Adrenal gland (tissue), 19 donors: ENCODE measurements at regions of chr2 and their contacts with region 1.

Region 1: DNA sequence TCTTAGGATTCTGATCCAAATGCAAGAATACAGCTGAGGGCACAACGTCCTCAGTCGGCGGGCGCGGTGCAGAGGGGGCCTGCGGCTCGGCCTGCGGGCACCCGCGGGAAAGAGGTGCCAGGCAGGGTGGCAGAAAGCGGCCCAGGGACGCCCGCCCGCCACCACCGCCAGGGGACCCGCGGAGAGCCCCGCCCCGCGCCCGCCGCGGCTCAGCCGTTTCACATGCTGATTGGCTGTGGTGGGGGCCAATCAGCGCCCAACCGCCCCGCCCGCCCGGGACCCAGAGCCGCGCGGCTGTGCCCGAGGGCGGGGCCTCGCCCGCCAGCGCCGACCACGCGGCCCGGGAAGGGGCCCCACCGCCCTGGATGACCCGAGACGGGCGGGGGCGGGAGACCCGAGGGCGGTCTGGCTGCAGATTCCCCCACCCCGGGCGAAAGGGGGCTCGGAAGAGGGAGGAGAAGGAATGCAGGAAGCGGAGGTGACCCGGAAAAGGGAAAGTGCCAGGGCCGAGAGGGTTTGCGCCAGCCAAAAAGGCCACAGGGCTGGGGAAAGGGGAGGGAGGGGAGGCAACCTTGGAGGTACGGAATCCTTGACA is 8.0 kb downstream of the IRS1 start:
- DNase-seq: peak; percentile 93 to 95 (median 94)
- H3K4me3 ChIP-seq: peak overlapping the region; percentile 28 to 63 (median 32)
- H3K27ac ChIP-seq: peak overlapping the region; percentile 84 to 97 (median 91)
- H3K4me1 ChIP-seq: peaks cover 55 to 74% of the 10 kb centered on the region in 2 donors
- H3K27me3 ChIP-seq: no peaks in the 10 kb centered on the region
- CTCF ChIP-seq: peak; percentile 6 to 82 (median 61)
- POLR2A ChIP-seq: peak; percentile 54 to 80

Region 2: GRCh38 chr2:226124548-226125011 is 667.0 kb before region 1 on chr2:
- intact Hi-C with region 1: loop called in 1 of 2 experiments (anchors 10 kb)
- DNase-seq: no peak
- H3K4me3 ChIP-seq: no peak overlapping the region
- H3K27ac ChIP-seq: peak overlapping the region in 1 of 5 donors; percentile 31
- H3K4me1 ChIP-seq: peaks cover 0 to 4% of the 10 kb centered on the region in 2 donors
- H3K27me3 ChIP-seq: no peaks in the 10 kb centered on the region
- CTCF ChIP-seq: no peak
- POLR2A ChIP-seq: no peak

Region 3: GRCh38 chr2:226215902-226216503 is 575.6 kb before region 1 on chr2:
- intact Hi-C with region 1: loop called (anchors 10 kb)
- DNase-seq: peak; percentile 54 to 81 (median 62)
- H3K4me3 ChIP-seq: no peak overlapping the region
- H3K27ac ChIP-seq: no peak overlapping the region
- H3K4me1 ChIP-seq: peaks cover 0 to 10% of the 10 kb centered on the region in 2 donors
- H3K27me3 ChIP-seq: no peaks in the 10 kb centered on the region
- CTCF ChIP-seq: peak; percentile 43 to 86 (median 68)
- POLR2A ChIP-seq: no peak

Region 4: GRCh38 chr2:226649871-226650660 is 141.5 kb before region 1 on chr2:
- intact Hi-C with region 1: loop called in 1 of 2 experiments (anchors 10 kb)
- DNase-seq: peak; percentile 61 to 90 (median 83)
- H3K4me3 ChIP-seq: no peak overlapping the region
- H3K27ac ChIP-seq: peak overlapping the region in 4 of 5 donors; percentile 33 to 81 (median 52)
- H3K4me1 ChIP-seq: peaks cover 9 to 29% of the 10 kb centered on the region in 2 donors
- H3K27me3 ChIP-seq: no peaks in the 10 kb centered on the region
- CTCF ChIP-seq: no peak
- POLR2A ChIP-seq: peak in 1 of 2 donors; percentile 33

Region 5: DNA sequence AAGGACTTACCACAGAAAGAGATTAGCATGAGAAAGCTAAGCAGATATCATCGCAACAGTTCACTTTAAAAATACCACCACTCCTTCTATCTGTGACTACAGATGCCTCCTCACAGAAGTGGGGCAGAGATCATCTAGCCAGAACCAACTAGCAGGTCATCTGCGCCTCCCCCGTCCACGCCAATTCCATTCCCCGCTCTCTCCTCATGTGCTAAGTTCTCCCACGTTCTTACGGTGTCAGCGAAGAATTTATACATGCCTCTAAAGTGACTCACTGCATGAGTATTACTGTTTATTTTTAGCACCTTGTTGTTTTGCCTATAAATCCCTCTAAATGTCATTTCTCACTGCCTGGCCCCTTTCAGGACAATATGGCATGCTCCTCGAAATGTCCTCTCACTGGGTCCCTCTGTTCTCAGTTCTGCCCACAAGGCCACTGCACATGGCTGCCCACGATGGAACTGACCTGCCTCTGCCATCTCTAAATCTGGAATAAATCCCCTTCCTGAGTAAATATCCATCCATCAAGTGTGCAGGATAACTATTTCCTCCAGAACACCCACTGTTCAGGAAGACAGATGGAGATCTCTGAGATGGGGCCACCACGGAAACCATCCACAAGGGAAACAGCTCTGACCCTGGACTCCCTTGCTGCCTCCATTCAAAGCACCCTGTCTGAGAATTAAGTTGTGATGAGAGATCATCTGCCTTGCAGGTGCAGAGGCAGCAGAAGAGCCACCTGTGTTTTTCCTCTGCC is 129.6 kb before region 1 on chr2:
- intact Hi-C with region 1: loop called (anchors 10 kb)
- DNase-seq: peak in 6 of 7 donors; percentile 33 to 75 (median 50)
- H3K4me3 ChIP-seq: no peak overlapping the region
- H3K27ac ChIP-seq: peak overlapping the region in 1 of 5 donors; percentile 61
- H3K4me1 ChIP-seq: peaks cover 11 to 13% of the 10 kb centered on the region in 2 donors
- H3K27me3 ChIP-seq: no peaks in the 10 kb centered on the region
- CTCF ChIP-seq: no peak
- POLR2A ChIP-seq: no peak